B cell (primary cell): ENCODE measurements at regions of chr14 and their contacts with region 1.

Region 1: DNA sequence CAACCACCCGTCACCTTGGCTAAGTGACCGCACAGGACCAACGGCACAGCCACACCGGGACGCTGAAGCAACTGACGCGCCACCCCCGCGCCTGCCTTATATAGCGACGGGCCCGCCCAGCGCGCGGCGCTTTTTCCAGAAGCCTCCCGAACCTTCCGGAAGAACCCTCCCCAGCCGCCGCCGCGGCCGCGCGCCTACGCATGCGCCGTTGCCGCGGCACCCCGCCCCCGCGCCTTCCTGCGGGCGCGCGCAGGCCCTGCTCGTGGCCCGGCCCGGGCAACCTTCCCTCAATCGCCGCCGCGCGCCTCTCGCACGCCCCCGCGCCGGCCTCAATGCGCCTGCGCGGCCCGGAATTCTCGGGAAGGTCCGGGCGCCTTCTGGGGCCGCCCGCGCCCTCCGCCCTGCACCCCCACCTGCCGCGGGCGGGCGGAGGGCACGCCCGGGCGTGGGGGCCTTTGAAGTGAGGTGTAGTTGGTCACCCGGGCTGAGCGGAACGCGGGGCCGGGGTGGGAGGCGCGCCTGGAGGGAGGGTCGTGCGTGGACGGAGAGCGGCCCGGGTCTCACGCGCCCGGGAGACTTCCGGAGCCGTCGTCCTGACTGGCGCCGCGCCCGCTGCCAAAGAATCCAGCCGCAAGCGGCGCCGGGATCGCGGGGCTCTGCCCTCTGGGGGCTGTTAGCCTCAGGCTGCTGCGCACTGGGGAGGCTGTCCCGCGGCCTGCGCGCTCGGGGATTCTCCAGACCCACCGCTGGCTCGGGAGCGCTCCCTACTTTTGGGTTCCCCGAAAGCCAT is at the start of gene HSP90AA1:
- DNase-seq: peak; percentile 97
- ATAC-seq: peak; percentile 70
- H3K4me3 ChIP-seq: peak within 1 kb of the TSS; percentile 79 to 91 (median 84)
- H3K4me3 Mint-ChIP-seq: peak within 1 kb of the TSS; percentile 95
- H3K27ac ChIP-seq: peak within 1 kb of the TSS; percentile 96 to 98
- H3K27ac Mint-ChIP-seq: peak within 1 kb of the TSS; percentile 96
- H3K4me1 ChIP-seq: peaks cover 18 to 28% of the 10 kb centered on the region in 2 donors
- H3K4me1 Mint-ChIP-seq: peaks cover 55% of the 10 kb centered on the region
- H3K27me3 ChIP-seq: no peaks in the 10 kb centered on the region
- H3K27me3 Mint-ChIP-seq: no peaks in the 10 kb centered on the region
- CTCF ChIP-seq: no peak
- total RNA-seq, gene HSP90AA1: 222 and 225 TPM in 2 replicates

Region 2: DNA sequence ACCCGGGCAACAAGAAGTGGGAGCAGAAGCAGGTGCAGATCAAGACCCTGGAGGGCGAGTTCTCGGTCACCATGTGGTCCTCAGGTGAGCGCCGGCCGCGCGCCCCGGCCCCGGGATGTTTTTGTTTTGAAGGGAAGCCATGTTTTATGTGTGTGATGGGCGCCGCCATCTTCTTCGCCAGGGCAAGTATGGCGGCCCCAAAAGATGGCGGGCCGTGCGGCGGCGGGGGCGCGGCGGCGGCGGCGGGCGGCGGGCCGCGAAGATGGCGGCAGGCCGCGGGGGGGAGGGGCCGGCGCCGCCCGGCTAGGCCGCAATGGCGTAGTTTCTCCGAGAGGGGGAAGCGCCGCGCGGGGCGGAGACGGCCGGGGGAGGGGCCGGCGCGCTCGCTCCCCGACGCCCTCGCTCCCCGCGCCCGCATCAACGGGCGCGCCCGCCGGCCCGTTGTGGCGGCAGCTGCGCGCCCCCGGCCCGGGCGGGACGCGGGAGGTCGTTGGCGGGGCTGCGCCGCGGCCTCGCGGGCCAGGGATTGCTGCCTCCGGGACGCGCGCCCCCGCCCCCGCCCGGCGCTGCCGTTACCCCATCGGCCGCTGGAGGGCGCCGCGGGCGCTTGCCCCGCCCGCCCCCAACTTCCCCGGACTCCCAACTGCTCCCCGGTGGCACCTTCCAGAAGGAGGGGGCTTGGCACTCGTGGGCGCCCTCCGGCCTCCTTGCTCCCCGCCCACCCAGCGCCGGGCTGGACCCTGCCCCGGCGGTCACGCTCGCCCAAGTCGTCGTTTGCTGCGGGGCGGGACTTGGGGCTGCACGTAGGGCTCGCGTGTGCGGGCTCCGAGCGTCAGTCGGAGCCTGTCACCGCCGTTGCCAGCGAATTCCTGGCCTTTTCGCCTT is 1847.1 kb before region 1 on chr14:
- CTCF ChIA-PET with region 1: no interaction called
- POLR2A ChIA-PET with region 1: interaction called, 10 read pairs
- intact Hi-C with region 1: no loop called
- DNase-seq: peak; percentile 93
- ATAC-seq: peak; percentile 52
- H3K4me3 ChIP-seq: peak overlapping the region; percentile 72 to 91 (median 87)
- H3K4me3 Mint-ChIP-seq: peak overlapping the region; percentile 87
- H3K27ac ChIP-seq: peak overlapping the region; percentile 55 to 97
- H3K27ac Mint-ChIP-seq: peak overlapping the region; percentile 95
- H3K4me1 ChIP-seq: peaks cover 38 to 47% of the 10 kb centered on the region in 2 donors
- H3K4me1 Mint-ChIP-seq: peaks cover 55% of the 10 kb centered on the region
- H3K27me3 ChIP-seq: no peaks in the 10 kb centered on the region
- H3K27me3 Mint-ChIP-seq: no peaks in the 10 kb centered on the region
- CTCF ChIP-seq: peak; percentile 67

Region 3: GRCh38 chr14:101854366-101854765 is 232.8 kb before region 1 on chr14:
- CTCF ChIA-PET with region 1: no interaction called
- POLR2A ChIA-PET with region 1: no interaction called
- intact Hi-C with region 1: no loop called
- DNase-seq: no peak
- ATAC-seq: no peak
- H3K4me3 ChIP-seq: no peak overlapping the region
- H3K4me3 Mint-ChIP-seq: no peak overlapping the region
- H3K27ac ChIP-seq: peak overlapping the region in 1 of 2 donors; percentile 53
- H3K27ac Mint-ChIP-seq: no peak overlapping the region
- H3K4me1 ChIP-seq: peaks cover 34 to 45% of the 10 kb centered on the region in 2 donors
- H3K4me1 Mint-ChIP-seq: peaks cover 64% of the 10 kb centered on the region
- H3K27me3 ChIP-seq: no peaks in the 10 kb centered on the region
- H3K27me3 Mint-ChIP-seq: no peaks in the 10 kb centered on the region
- CTCF ChIP-seq: no peak

Region 4: DNA sequence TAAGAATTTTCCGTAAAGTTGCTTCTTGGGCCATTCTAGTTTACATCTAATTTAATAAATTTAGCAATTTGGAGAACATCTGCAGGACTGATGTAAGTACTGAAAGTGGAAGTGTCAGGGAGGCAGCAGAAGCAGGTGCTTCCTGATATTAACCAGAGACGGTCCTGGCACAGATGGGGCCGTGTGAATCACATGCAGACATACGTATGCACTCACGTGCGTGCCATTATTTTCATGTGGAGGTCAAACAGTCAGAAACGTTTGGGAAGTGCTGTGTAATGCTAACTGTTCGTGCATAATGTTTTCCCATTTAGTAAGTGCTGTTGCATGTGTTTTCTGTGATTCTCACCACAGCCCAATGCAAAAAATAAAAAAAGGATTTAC is 210.6 kb before region 1 on chr14:
- CTCF ChIA-PET with region 1: no interaction called
- POLR2A ChIA-PET with region 1: no interaction called
- intact Hi-C with region 1: loop called (anchors 5 kb)
- DNase-seq: peak; percentile 96
- ATAC-seq: peak; percentile 89
- H3K4me3 ChIP-seq: peak overlapping the region in 4 of 5 experiments; percentile 8 to 57 (median 29)
- H3K4me3 Mint-ChIP-seq: peak overlapping the region; percentile 71
- H3K27ac ChIP-seq: peak overlapping the region; percentile 94 to 96
- H3K27ac Mint-ChIP-seq: peak overlapping the region; percentile 72
- H3K4me1 ChIP-seq: peaks cover 52 to 58% of the 10 kb centered on the region in 2 donors
- H3K4me1 Mint-ChIP-seq: peaks cover 79% of the 10 kb centered on the region
- H3K27me3 ChIP-seq: no peaks in the 10 kb centered on the region
- H3K27me3 Mint-ChIP-seq: no peaks in the 10 kb centered on the region
- CTCF ChIP-seq: no peak

Region 5: DNA sequence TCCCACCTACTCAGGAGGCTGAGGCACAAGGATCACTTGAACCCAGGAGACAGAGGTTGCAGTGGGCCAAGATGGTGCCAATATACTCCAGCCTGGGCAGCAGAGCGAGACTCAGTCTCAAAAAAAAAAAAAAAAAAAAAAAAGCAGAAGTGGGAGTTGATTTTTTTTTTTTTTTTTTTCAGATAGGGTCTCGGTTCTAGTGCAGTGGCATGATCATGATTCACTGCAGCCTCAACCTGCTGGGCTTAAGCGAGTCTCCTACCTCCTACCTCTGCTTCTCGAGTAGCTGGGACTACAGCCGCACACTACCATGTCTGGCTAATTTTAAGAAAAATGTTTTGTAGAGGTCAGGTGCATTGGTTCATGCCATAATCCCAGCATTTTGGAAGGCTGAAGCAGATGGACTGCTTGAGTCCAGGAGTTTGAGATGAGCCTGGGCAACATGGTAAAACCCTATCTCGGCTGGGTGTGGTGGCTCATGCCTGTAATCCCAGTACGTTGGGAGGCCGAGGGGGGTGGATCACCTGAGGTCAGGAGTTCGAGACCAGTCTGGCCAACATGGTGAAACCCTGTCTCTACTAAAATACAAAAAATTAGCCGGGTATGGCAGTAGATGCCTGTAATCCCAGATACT is 16.0 kb after region 1 on chr14:
- CTCF ChIA-PET with region 1: interaction called, 12 read pairs
- POLR2A ChIA-PET with region 1: interaction called, 3 read pairs
- intact Hi-C with region 1: loop called (anchors 1 kb)
- DNase-seq: peak; percentile 63
- ATAC-seq: peak; percentile 93
- H3K4me3 ChIP-seq: no peak overlapping the region
- H3K4me3 Mint-ChIP-seq: no peak overlapping the region
- H3K27ac ChIP-seq: no peak overlapping the region
- H3K27ac Mint-ChIP-seq: peak overlapping the region; percentile 68
- H3K4me1 ChIP-seq: peaks cover 16 to 20% of the 10 kb centered on the region in 2 donors
- H3K4me1 Mint-ChIP-seq: peaks cover 28% of the 10 kb centered on the region
- H3K27me3 ChIP-seq: no peaks in the 10 kb centered on the region
- H3K27me3 Mint-ChIP-seq: no peaks in the 10 kb centered on the region
- CTCF ChIP-seq: no peak

Region 6: DNA sequence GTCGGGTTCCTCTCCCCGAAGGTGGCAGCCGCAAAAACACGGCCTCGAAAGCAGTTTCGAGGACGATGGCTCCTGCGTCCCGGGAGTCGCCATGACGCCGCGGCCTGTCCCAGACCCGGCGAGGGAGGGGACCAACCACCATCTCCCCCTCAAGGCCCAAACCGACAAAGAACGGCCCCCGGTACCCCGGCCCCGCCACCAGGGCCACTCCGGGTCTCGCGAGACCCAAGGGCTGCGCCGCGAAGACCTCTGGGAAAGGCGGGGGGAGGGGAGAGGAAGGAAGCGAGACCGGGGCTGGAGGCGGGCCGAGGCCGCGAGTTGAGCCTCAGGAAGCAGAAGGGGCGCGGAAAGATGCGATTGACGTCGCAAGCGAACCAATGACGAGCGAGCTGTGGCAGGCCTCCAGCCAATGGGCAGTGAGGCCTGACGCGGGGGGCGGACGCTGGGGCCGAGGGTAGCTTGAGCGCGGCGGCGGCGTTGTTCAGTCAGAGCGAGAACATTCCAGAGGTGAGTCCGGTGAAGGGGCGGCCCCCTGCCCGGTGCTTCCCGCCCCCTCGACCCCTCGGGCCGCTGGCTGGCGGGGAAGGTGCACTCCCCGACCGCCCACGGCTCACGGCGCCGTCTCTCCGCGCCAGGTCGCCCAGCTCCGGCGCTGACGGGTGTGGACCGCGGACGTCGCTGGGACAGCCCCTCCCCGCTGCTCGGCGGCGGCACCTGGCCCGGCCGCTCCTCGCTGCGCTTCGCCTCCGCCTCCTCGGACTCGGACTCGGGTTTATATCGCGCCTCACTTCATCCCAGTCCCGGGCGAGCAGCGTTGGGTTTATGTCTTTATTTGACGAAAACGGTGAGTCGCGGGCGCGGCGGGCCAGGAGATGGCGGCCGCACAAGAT is 1246.8 kb after region 1 on chr14 and contains the start of gene EIF5:
- CTCF ChIA-PET with region 1: no interaction called
- POLR2A ChIA-PET with region 1: no interaction called
- intact Hi-C with region 1: loop called (anchors 5 kb)
- DNase-seq: peak; percentile 100
- ATAC-seq: peak; percentile 85
- H3K4me3 ChIP-seq: peak within 1 kb of the TSS; percentile 78 to 100 (median 94)
- H3K4me3 Mint-ChIP-seq: peak within 1 kb of the TSS; percentile 96
- H3K27ac ChIP-seq: peak within 1 kb of the TSS; percentile 98 to 99
- H3K27ac Mint-ChIP-seq: peak within 1 kb of the TSS; percentile 100
- H3K4me1 ChIP-seq: peaks cover 17 to 25% of the 10 kb centered on the region in 2 donors
- H3K4me1 Mint-ChIP-seq: peaks cover 42% of the 10 kb centered on the region
- H3K27me3 ChIP-seq: no peaks in the 10 kb centered on the region
- H3K27me3 Mint-ChIP-seq: no peaks in the 10 kb centered on the region
- CTCF ChIP-seq: peak; percentile 51
- total RNA-seq, gene EIF5: 314 TPM in 2 replicates